Caco-2 (cell line): ENCODE measurements at regions of chr2 and their contacts with region 1.

Region 1: GRCh38 chr2:60581433-60582282 is 28.2 kb upstream of the BCL11A start:
- DNase-seq: peak; percentile 51 to 86
- H3K4me3 ChIP-seq: peak overlapping the region; percentile 21
- H3K4me3 Mint-ChIP-seq: peak overlapping the region; percentile 65
- H3K27ac Mint-ChIP-seq: no peak overlapping the region
- H3K4me1 ChIP-seq: no peaks in the 10 kb centered on the region
- H3K4me1 Mint-ChIP-seq: peaks cover 6% of the 10 kb centered on the region
- H3K27me3 ChIP-seq: no peaks in the 10 kb centered on the region; the same call in 1 of the 2 replicates
- H3K27me3 Mint-ChIP-seq: peaks cover 27% of the 10 kb centered on the region
- CTCF ChIP-seq: peak; percentile 93 to 97

Region 2: DNA sequence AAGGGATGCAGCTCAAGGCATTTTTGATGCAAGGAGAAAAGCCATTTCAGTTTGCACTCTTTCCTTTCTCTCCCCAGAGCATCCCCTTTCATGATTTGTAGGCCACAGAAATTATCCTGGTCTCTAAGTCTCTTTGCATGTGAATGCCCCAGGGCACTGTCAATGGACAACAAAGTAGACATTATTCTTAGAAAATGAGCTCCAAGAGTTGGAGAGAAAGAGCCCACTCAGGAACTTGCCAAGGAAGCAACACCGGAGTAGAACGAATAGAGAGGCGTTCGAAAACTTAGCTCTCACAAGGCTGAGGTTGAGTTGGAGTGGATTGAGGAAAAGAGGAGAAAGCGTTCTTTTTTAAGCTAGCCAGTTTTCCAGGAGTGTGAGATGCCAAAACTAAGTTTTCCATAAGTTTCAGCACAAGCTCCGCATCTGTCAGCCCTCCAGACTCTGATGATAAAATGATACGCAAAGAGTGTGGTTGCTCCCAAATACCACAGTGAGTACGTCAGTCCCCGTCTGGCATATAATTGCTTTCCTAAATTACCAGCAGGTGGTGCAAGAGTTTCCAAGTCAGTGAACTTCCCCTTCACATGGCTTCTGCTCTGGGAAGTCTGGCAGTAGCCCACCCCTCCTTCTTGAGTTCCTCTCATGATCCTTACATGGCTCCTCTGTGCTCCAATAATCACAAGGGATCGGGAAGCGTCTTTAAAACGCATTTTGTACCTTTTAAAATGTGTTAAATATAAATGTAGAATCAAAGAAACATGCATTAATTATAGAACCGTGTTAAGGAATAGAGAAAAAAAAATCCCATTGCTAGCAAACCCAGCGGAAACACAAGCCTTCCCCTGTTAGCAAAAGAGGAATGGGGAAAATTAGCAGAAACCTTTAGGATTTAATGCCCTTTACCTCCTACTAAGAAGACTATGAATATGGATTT is 1279.9 kb before region 1 on chr2:
- CTCF ChIA-PET with region 1: no interaction called
- POLR2A ChIA-PET with region 1: no interaction called
- intact Hi-C with region 1: loop called (anchors 5 kb)
- DNase-seq: peak; percentile 56 to 64
- H3K4me3 ChIP-seq: no peak overlapping the region
- H3K4me3 Mint-ChIP-seq: no peak overlapping the region
- H3K27ac Mint-ChIP-seq: no peak overlapping the region
- H3K4me1 ChIP-seq: no peaks in the 10 kb centered on the region
- H3K4me1 Mint-ChIP-seq: no peaks in the 10 kb centered on the region
- H3K27me3 ChIP-seq: no peaks in the 10 kb centered on the region
- H3K27me3 Mint-ChIP-seq: peaks cover 3% of the 10 kb centered on the region
- CTCF ChIP-seq: peak; percentile 47 to 66

Region 3: GRCh38 chr2:60560734-60561644 is 20.7 kb before region 1 on chr2:
- CTCF ChIA-PET with region 1: interaction called, 50 read pairs
- POLR2A ChIA-PET with region 1: no interaction called
- intact Hi-C with region 1: loop called (anchors 1 kb)
- DNase-seq: peak in 1 of 2 experiments; percentile 62
- H3K4me3 ChIP-seq: no peak overlapping the region
- H3K4me3 Mint-ChIP-seq: no peak overlapping the region
- H3K27ac Mint-ChIP-seq: no peak overlapping the region
- H3K4me1 ChIP-seq: no peaks in the 10 kb centered on the region
- H3K4me1 Mint-ChIP-seq: peaks cover 10% of the 10 kb centered on the region
- H3K27me3 ChIP-seq: no peaks in the 10 kb centered on the region
- H3K27me3 Mint-ChIP-seq: peaks cover 34% of the 10 kb centered on the region
- CTCF ChIP-seq: peak; percentile 17 to 60